Psoas muscle (tissue), 8 donors: ENCODE measurements at regions of chr6 and their contacts with region 1.

Region 1: DNA sequence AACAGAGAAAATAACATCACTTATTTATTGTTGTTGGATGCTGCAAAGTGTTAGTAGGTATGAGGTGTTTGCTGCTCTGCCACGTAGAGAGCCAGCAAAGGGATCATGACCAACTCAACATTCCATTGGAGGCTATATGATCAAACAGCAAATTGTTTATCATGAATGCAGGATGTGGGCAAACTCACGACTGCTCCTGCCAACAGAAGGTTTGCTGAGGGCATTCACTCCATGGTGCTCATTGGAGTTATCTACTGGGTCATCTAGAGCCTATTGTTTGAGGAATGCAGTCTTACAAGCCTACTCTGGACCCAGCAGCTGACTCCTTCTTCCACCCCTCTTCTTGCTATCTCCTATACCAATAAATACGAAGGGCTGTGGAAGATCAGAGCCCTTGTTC is 12.0 kb downstream of the MICB start:
- DNase-seq: no peak
- ATAC-seq: no peak
- H3K4me3 ChIP-seq: no peak overlapping the region
- H3K27ac ChIP-seq: no peak overlapping the region
- H3K4me1 ChIP-seq: no peaks in the 10 kb centered on the region
- H3K27me3 ChIP-seq: peaks cover 0 to 2% (median 0%) of the 10 kb centered on the region in 3 donors
- CTCF ChIP-seq: no peak

Region 2: GRCh38 chr6:31107052-31107451 is 402.9 kb before region 1 on chr6:
- intact Hi-C with region 1: loop called in 1 of 2 experiments (anchors 5 kb)
- DNase-seq: no peak
- ATAC-seq: no peak
- H3K4me3 ChIP-seq: no peak overlapping the region
- H3K27ac ChIP-seq: no peak overlapping the region
- H3K4me1 ChIP-seq: no peaks in the 10 kb centered on the region
- H3K27me3 ChIP-seq: peaks cover 0 to 12% (median 0%) of the 10 kb centered on the region in 3 donors
- CTCF ChIP-seq: no peak

Region 3: GRCh38 chr6:31815025-31815838 is 305.2 kb after region 1 on chr6 and contains the starts of genes HSPA1A and HSPA1L:
- intact Hi-C with region 1: no loop called
- DNase-seq: peak; percentile 94 to 98
- ATAC-seq: peak; percentile 77 to 85 (median 80)
- H3K4me3 ChIP-seq: peak within 1 kb of the TSS; percentile 76
- H3K27ac ChIP-seq: peak within 1 kb of the TSS; percentile 88
- H3K4me1 ChIP-seq: peaks cover 26% of the 10 kb centered on the region
- H3K27me3 ChIP-seq: no peaks in the 10 kb centered on the region
- CTCF ChIP-seq: no peak
- total RNA-seq, gene HSPA1A: 241 to 940 (median 407) TPM
- total RNA-seq, gene HSPA1L: 2.5 to 6.2 (median 4.4) TPM